Activated T-helper 1 cell treated with anti-CD3 and anti-CD28 coated beads, Interleukin-12 subunit alpha, Interleukin-12 subunit beta, Interleukin-2, Interleukin-4 antibody, amounts not matched to agents 30 ng/mL and 10 ng/mL and 1 ng/mL, durations not matched to agents 14 hours and 24 hours and 36 hours (primary cell): ENCODE measurements at regions of chr12 and their contacts with region 1.

Region 1: DNA sequence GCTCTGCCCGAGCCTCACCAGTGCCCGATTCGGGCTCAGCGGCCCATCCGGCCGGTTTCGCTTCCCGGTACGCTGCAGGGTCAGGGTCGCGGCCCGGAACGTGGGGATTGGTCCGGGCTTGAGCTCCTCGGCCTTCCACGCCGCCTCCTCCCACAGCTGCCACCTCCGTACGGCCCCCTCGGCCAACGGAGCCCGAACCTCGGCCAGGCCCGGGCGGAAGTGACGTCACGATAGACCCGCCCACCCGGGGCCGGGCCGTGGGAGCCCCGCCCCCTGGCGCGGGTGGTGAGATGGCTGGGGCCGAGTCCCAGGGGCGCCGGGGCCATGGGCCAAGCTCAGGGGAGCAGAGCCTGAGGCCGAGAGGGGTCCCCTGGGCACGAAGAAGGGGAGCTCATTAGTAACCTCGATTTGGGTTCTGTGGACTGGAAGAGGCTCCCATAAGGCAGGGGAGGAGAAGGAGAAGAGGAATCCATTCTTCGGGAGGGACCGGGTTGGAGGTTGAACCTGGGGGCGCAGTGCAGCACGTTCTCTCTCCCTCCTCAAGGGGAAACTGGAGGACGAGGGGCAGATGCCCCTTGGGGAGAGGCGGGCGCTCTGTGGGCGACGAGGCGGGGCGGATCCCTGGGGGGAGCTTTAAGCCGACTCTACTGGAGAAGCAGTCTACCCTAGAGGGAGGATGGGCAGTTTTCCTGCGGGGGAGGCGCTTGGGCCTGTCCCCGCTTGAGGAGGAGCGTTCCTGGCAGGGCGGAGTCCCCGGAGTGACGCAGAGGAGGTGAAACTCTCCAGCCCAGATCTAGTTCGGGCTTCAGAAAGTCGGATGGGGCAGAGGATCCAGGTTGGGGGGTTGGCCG is at the start of gene MLF2:
- DNase-seq: peak; percentile 97
- H3K4me3 Mint-ChIP-seq: peak within 1 kb of the TSS; percentile 94
- H3K27ac Mint-ChIP-seq: peak within 1 kb of the TSS; percentile 96
- H3K4me1 Mint-ChIP-seq: peaks cover 32% of the 10 kb centered on the region
- H3K27me3 Mint-ChIP-seq: no peaks in the 10 kb centered on the region
- total RNA-seq, gene MLF2: 159 and 161 TPM in 2 replicates

Region 2: DNA sequence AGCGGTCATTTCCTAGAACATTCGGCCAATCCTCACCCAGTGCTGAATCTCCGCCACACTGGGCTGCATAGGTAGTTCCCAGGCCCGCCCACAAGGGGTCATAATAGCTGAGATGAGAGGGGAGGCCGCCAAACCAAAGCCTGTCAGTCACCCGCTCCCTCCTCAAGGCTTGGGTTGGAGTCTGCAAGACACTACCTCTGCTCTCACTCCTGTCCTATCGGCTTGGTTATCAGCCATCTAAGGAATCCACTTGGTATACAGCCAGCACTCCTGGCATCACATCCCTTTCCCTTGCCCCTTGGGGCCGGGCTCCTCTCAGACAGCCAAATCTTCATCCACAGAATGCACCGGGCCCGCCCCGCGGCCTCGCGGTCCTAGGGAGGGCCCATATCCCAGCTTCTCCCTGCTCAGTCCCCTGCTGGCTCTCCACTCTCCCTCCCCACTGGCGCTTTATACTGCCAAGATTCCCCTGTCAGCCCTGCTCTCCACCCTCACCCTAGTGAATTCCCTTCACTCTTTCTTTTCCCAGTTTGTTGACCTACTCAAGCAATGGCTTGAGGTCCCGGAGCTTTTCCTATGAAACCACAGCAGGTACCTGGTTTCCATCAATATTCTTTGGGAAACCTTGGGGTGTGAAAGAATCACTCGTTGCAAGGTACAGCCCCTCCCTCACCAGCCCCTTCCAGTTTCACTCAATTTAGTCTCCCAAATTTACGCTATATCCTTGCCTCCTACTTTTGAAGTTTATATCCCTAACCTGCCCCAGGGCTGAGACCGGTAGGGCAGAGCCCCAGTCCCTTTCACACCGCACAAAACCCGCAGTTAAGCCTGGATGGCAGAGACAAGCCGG is 198.8 kb before region 1 on chr12:
- intact Hi-C with region 1: loop called (anchors 1 kb)
- DNase-seq: no peak
- H3K4me3 Mint-ChIP-seq: peak overlapping the region; percentile 88
- H3K27ac Mint-ChIP-seq: peak overlapping the region; percentile 61
- H3K4me1 Mint-ChIP-seq: peaks cover 36% of the 10 kb centered on the region
- H3K27me3 Mint-ChIP-seq: no peaks in the 10 kb centered on the region

Region 3: GRCh38 chr12:6697584-6698351 is 55.4 kb before region 1 on chr12:
- intact Hi-C with region 1: no loop called
- DNase-seq: no peak
- H3K4me3 Mint-ChIP-seq: no peak overlapping the region
- H3K27ac Mint-ChIP-seq: no peak overlapping the region
- H3K4me1 Mint-ChIP-seq: peaks cover 6% of the 10 kb centered on the region
- H3K27me3 Mint-ChIP-seq: peaks cover 46% of the 10 kb centered on the region

Region 4: GRCh38 chr12:6764011-6764828 is 11.1 kb after region 1 on chr12:
- intact Hi-C with region 1: loop called (anchors 1 kb)
- DNase-seq: peak; percentile 64
- H3K4me3 Mint-ChIP-seq: peak overlapping the region; percentile 79
- H3K27ac Mint-ChIP-seq: peak overlapping the region; percentile 57
- H3K4me1 Mint-ChIP-seq: peaks cover 43% of the 10 kb centered on the region
- H3K27me3 Mint-ChIP-seq: peaks cover 21% of the 10 kb centered on the region

Region 5: DNA sequence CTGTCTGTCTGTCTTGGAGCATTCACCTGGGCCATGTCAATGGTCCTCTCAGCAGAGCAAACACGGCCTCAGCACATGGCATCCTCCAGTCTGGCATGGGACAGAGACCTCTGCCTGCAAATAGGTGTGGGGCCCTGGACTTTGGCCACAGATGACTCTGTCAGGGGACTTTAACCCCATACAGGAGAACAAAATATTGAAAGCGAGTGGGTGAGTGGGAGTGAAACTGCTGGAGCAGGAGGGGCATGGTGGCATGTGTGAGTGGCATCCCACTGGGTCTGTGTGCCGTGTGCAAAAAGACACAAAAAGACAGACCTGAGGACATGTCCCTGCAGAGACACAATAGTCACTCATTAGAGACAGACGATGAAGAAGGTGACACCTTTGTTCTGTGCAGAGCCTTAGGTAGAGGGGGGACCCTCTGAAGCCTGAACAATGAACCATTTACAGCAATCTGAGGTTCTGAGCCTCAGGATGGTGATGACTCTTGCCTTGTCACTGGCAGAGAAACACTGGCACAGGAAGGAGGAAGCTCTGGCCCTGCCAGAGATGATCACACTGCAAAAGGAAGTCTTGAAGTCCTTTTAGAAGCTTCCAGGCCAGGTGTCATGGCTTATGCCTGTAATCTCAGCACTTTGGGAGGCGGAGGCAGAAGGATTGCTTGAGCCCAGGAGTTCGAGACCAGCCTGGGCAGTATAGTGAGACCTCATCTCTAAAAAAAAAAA is 26.7 kb after region 1 on chr12:
- intact Hi-C with region 1: loop called (anchors 1 kb)
- DNase-seq: no peak
- H3K4me3 Mint-ChIP-seq: peak overlapping the region; percentile 57
- H3K27ac Mint-ChIP-seq: peak overlapping the region; percentile 91
- H3K4me1 Mint-ChIP-seq: peaks cover 89% of the 10 kb centered on the region
- H3K27me3 Mint-ChIP-seq: no peaks in the 10 kb centered on the region

Region 6: DNA sequence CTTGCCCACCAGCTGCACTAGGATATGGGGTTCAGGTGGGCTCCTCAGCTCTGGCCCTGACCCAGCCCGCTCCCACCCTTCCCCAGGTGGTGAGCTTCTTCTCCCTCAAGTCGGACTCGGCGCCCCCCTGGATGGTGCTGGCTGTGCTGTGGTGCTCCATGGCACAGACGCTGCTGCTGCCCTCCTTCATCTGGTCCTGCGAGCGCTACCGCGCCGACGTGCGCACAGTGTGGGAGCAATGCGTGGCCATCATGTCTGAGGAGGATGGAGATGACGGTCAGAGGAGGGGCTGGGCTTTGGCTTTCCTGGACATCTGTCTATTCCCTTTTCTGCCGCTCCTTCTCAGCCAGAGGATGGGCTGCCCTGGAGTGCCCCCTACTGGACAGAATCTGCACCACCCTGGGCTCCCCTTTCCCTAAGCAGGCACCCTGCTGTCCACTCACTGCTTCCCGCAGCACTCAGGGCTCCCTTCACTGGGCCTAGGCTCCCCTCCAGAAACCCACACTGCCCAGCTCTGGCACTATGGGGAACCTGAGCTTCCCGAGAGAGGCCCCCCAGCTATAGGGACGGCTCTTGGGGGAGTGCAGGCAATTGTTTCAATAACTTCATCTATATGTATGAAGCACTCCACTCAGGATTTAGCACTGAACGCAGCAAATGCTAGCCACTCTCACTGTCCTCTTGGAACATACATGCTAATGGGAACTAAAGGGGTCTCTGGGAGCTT is 72.4 kb after region 1 on chr12:
- intact Hi-C with region 1: loop called (anchors 1 kb)
- DNase-seq: peak; percentile 72
- H3K4me3 Mint-ChIP-seq: peak overlapping the region; percentile 40
- H3K27ac Mint-ChIP-seq: peak overlapping the region; percentile 59
- H3K4me1 Mint-ChIP-seq: peaks cover 46% of the 10 kb centered on the region
- H3K27me3 Mint-ChIP-seq: peaks cover 46% of the 10 kb centered on the region

Region 7: DNA sequence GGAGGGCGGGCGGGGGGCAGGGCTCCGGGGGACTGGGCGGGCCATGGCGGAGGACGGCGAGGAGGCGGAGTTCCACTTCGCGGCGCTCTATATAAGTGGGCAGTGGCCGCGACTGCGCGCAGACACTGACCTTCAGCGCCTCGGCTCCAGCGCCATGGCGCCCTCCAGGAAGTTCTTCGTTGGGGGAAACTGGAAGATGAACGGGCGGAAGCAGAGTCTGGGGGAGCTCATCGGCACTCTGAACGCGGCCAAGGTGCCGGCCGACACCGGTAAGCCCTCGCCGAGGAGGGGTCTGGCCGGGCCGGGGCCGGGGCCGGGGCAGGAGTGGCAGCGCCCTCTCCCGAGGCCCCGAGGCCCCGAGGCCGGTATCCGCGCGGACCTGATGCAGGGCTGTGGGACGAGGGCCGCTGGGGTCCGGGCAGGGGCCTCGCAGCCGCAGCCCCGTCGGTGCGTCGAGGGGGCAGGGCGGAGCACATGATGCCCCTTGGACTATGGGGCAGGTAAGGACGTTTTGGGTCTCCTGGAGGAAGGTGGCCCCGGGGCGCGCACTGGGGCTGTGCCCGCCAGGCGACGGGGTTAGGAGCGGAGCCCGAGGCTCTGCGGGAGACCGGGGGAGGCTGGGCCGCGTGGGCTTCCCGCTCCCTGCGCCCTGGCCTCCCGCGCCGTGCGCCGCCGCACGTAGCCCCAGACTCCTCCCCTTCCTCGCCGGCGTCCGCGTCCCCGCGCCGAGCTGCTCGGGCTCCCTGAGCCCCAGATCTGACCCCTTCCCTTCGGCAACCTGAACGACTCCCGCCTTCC is 114.5 kb after region 1 on chr12 and contains the start of gene TPI1:
- intact Hi-C with region 1: loop called (anchors 1 kb)
- DNase-seq: peak; percentile 75
- H3K4me3 Mint-ChIP-seq: peak within 1 kb of the TSS; percentile 96
- H3K27ac Mint-ChIP-seq: peak within 1 kb of the TSS; percentile 99
- H3K4me1 Mint-ChIP-seq: peaks cover 53% of the 10 kb centered on the region
- H3K27me3 Mint-ChIP-seq: no peaks in the 10 kb centered on the region
- total RNA-seq, gene TPI1: 1,427 and 1,438 TPM in 2 replicates

Region 8: GRCh38 chr12:6890789-6891645 is 137.9 kb after region 1 on chr12:
- intact Hi-C with region 1: loop called (anchors 1 kb)
- DNase-seq: peak; percentile 98
- H3K4me3 Mint-ChIP-seq: peak overlapping the region; percentile 84
- H3K27ac Mint-ChIP-seq: peak overlapping the region; percentile 95
- H3K4me1 Mint-ChIP-seq: peaks cover 19% of the 10 kb centered on the region
- H3K27me3 Mint-ChIP-seq: no peaks in the 10 kb centered on the region

Region 9: GRCh38 chr12:7018350-7019042 is 265.4 kb after region 1 on chr12 and contains the start of gene LPCAT3:
- intact Hi-C with region 1: no loop called
- DNase-seq: peak; percentile 98
- H3K4me3 Mint-ChIP-seq: peak within 1 kb of the TSS; percentile 93
- H3K27ac Mint-ChIP-seq: peak within 1 kb of the TSS; percentile 95
- H3K4me1 Mint-ChIP-seq: peaks cover 36% of the 10 kb centered on the region
- H3K27me3 Mint-ChIP-seq: no peaks in the 10 kb centered on the region
- total RNA-seq, gene LPCAT3: 27.9 and 30.0 TPM in 2 replicates